Activated T-helper 2 cell treated with anti-CD3 and anti-CD28 coated beads, Interferon-gamma antibody, Interleukin-2, Interleukin-4, amounts not matched to agents 10 μg/mL and 5 μg/mL and 100 μg/mL, durations not matched to agents 14 hours and 24 hours and 36 hours (primary cell): ENCODE measurements at regions of chr17 and their contacts with region 1.

Region 1: GRCh38 chr17:1374431-1375177 is 25.4 kb downstream of the YWHAE start:
- DNase-seq: no peak
- H3K4me3 Mint-ChIP-seq: no peak overlapping the region
- H3K27ac Mint-ChIP-seq: peak overlapping the region; percentile 74
- H3K4me1 Mint-ChIP-seq: peaks cover 47% of the 10 kb centered on the region
- H3K27me3 Mint-ChIP-seq: no peaks in the 10 kb centered on the region

Region 2: DNA sequence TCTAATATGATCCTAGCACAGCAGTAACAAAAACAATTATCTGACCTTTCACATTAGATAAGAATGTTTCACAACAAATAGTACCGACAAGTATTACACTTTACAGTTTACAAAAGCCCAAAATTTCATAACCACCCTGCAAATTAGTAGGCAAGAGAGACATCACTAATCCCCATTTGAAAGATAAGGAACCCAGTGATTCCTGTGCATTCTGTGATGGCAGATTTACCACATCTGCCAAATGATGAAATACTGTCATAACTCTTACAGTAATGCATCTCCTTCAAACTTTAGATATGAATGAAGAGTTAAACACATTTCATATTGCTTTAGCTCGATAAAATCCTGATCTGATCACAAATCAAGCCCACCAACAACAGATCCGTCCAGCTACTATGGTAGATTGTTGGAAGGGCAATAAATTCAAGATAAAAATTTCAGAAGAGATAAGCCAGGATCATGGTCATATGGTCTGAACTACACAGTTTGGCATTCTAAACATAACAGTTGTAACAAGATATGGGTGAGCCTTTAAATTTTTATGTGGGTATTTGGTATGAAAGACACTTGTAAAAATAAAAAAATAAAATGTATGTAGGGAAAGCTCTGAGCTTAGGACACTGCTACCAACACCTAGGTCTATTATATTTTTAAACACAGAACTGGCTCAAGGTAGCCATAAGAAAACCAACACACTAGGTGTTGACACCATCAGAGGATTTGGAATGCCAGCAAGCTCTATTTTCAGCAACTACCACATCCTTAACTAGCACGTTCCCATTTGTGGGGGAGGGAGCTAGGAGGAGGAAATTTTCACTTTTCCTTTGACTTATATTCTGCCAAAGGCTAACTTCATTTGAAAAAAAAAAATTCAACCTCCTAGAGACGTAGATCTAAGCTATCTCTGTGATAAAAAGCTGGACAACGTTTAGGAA is 16.1 kb after region 1 on chr17:
- intact Hi-C with region 1: loop called (anchors 2 kb)
- DNase-seq: no peak
- H3K4me3 Mint-ChIP-seq: no peak overlapping the region
- H3K27ac Mint-ChIP-seq: peak overlapping the region; percentile 61
- H3K4me1 Mint-ChIP-seq: peaks cover 33% of the 10 kb centered on the region
- H3K27me3 Mint-ChIP-seq: no peaks in the 10 kb centered on the region

Region 3: DNA sequence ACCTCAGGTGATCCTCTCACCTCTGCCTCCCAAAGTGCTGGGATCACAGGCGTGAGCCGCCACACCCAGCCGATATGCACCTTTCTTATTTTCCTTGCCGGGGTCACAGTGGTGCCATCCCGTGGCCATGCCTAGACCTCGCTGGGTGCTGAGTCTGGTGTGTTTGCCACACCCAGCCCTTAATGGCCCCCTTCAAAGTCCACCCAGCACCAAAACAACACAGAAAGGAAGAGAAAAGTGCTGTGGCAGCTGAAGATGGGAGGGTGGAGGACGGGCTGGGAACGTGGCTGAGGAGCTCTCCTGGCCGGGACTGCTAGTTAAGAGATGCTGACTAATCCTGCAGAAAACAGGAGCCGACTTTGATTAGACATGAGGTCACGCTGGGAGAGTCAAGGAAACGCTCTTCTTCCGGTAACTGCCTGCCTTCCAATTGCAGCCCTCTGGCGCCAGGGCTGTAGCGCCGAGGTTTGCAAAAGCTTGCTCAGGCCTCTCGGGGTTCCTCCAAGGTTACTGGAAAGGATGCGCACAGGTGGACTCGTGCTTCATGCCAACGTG is 243.1 kb after region 1 on chr17:
- intact Hi-C with region 1: no loop called
- DNase-seq: no peak
- H3K4me3 Mint-ChIP-seq: no peak overlapping the region
- H3K27ac Mint-ChIP-seq: peak overlapping the region; percentile 39
- H3K4me1 Mint-ChIP-seq: no peaks in the 10 kb centered on the region
- H3K27me3 Mint-ChIP-seq: no peaks in the 10 kb centered on the region